ENCODE measurements at regions of chr2 and their contacts with region 1.

Region 1: GRCh38 chr2:85707304-85707703 is 13.1 kb downstream of the GNLY start:
- DNase-seq: peak in 2 of 5 donors; percentile 63 to 72
- ATAC-seq: peak in 1 of 4 donors; percentile 38
- H3K4me3 ChIP-seq: no peak overlapping the region
- H3K27ac ChIP-seq: peak overlapping the region in 7 of 12 donors; percentile 30 to 94 (median 42)
- H3K4me1 ChIP-seq: peaks cover 5 to 90% (median 42%) of the 10 kb centered on the region in 12 donors
- H3K27me3 ChIP-seq: no peaks in the 10 kb centered on the region
- CTCF ChIP-seq: peak; percentile 82 to 94 (median 88)
- POLR2A ChIP-seq: no peak

Region 2: GRCh38 chr2:85635636-85636035 is 71.7 kb before region 1 on chr2:
- intact Hi-C with region 1: loop called in 7 of 10 experiments (anchors 2 to 10 kb)
- DNase-seq: no peak
- ATAC-seq: peak in 2 of 4 donors; percentile 59 to 69
- H3K4me3 ChIP-seq: no peak overlapping the region
- H3K27ac ChIP-seq: peak overlapping the region in 1 of 12 donors; percentile 3
- H3K4me1 ChIP-seq: peaks cover 0 to 8% (median 0%) of the 10 kb centered on the region in 12 donors
- H3K27me3 ChIP-seq: no peaks in the 10 kb centered on the region
- CTCF ChIP-seq: no peak
- POLR2A ChIP-seq: no peak

Region 3: DNA sequence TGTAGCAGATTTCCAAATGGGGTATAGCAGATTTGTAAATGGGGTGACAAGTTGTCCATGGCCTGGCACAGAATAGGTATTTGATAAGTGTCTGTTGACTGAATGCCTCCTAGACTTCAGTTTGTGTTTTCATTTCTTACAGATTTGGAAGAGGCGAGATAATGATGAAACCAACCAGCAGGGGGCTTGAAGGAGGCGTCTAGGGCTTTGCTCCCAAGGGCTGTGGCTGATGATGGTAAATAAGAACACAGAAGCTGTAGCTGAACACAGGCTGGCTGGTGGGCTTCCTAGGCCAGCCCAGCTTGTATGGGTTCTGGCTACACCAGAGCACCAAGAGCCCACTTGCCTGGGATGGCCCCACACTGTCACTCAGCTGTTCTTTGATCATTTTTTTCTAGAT is 58.7 kb before region 1 on chr2:
- intact Hi-C with region 1: loop called in 4 of 10 experiments (anchors 5 to 10 kb)
- DNase-seq: peak in 1 of 5 donors; percentile 37
- ATAC-seq: peak in 3 of 4 donors; percentile 35 to 60 (median 38)
- H3K4me3 ChIP-seq: no peak overlapping the region
- H3K27ac ChIP-seq: peak overlapping the region in 8 of 12 donors; percentile 13 to 68 (median 46)
- H3K4me1 ChIP-seq: peaks cover 0 to 16% (median 11%) of the 10 kb centered on the region in 12 donors
- H3K27me3 ChIP-seq: no peaks in the 10 kb centered on the region
- CTCF ChIP-seq: peak; percentile 8 to 56 (median 42)
- POLR2A ChIP-seq: no peak

Region 4: GRCh38 chr2:85662899-85663593 is 44.3 kb before region 1 on chr2:
- intact Hi-C with region 1: loop called in 1 of 10 experiments (anchors 5 kb)
- DNase-seq: peak in 3 of 5 donors; percentile 39 to 71 (median 52)
- ATAC-seq: peak; percentile 60 to 87 (median 84)
- H3K4me3 ChIP-seq: no peak overlapping the region
- H3K27ac ChIP-seq: peak overlapping the region; percentile 10 to 81 (median 62)
- H3K4me1 ChIP-seq: peaks cover 0 to 34% (median 25%) of the 10 kb centered on the region in 12 donors
- H3K27me3 ChIP-seq: no peaks in the 10 kb centered on the region
- CTCF ChIP-seq: no peak
- POLR2A ChIP-seq: no peak

Region 5: DNA sequence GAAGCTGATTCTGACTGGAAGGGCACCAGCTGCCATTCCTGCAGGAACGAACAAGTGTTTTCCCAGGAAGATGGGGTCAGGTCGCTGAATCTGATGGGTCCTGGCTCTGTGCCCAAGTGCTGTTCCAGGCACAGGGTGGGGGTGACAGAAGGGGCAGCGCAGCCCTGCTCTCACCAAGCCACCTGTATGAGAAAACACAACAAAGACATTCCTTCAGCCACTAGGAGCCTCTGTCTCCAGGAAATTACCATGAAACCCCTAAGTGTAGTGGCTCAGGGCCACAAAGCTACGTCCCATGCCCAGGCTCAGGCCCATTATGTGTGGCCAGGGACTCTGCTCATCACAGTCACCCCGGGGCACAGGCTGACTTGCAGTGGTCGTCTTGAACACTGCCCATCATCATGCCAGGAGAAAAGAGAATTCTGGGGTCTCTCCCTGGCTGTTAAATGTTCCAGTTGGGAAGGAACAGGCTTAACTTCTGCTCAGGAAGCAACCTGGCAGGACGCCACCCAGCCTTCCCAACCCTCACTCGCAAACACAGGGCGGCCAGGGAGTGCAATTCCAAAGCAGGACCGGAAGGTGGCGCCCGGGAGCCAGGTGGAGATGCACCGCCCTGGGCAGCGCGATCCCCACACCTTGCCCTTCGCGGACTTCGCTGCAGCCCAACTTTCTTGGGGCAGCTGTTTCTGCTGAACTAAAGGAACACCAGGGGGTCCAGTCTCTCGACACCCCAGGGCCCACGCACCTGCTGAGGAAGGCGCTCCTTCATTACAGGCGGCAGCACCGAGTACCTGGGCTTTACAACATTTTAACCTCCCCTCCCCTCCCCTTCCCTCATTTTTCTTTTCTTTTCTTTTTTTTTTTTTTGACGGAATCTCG is 28.3 kb before region 1 on chr2:
- intact Hi-C with region 1: loop called in 4 of 10 experiments (anchors 1 to 2 kb)
- DNase-seq: peak; percentile 87 to 95 (median 89)
- ATAC-seq: peak; percentile 86 to 95 (median 92)
- H3K4me3 ChIP-seq: peak overlapping the region in 1 of 12 donors; percentile 3
- H3K27ac ChIP-seq: peak overlapping the region in 11 of 12 donors; percentile 6 to 75 (median 47)
- H3K4me1 ChIP-seq: peaks cover 0 to 50% (median 18%) of the 10 kb centered on the region in 12 donors
- H3K27me3 ChIP-seq: no peaks in the 10 kb centered on the region
- CTCF ChIP-seq: peak; percentile 94 to 99 (median 99)
- POLR2A ChIP-seq: no peak

Region 6: GRCh38 chr2:85750587-85751575 is 43.6 kb after region 1 on chr2:
- intact Hi-C with region 1: no loop called
- DNase-seq: peak; percentile 75 to 84 (median 81)
- ATAC-seq: peak; percentile 57 to 71 (median 62)
- H3K4me3 ChIP-seq: peak overlapping the region in 1 of 12 donors; percentile 10
- H3K27ac ChIP-seq: peak overlapping the region in 10 of 12 donors; percentile 2 to 96 (median 28)
- H3K4me1 ChIP-seq: peaks cover 15 to 79% (median 63%) of the 10 kb centered on the region in 12 donors
- H3K27me3 ChIP-seq: peaks cover 0 to 37% (median 0%) of the 10 kb centered on the region in 9 donors
- CTCF ChIP-seq: peak; percentile 76 to 87 (median 82)
- POLR2A ChIP-seq: no peak